CD8-positive, alpha-beta T cell (primary cell): ENCODE measurements at regions of chr7 and their contacts with region 1.

Region 1: DNA sequence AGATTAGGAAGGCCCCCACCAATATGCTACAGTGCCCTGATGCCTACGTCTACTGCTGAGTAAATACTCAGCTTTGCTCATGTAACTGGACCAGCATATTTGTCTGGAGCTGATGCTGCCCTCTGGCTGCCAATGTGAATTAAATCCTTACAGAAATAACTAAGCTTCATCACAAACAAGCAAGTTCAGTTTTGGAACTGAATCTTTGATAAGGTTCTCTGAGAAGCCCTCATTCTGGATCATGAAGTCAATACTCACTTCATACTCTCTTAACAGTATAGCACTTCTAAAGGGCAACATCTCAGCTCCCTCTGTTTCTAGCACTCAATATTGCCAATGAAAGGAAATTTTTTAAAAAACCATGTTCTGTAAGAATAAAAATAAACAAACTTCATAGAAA is 246.7 kb downstream of the ETV1 start:
- DNase-seq: peak in 2 of 9 experiments; percentile 20 to 24
- ATAC-seq: no peak
- H3K4me3 ChIP-seq: no peak overlapping the region
- H3K4me3 Mint-ChIP-seq: no peak overlapping the region
- H3K27ac ChIP-seq: no peak overlapping the region
- H3K27ac Mint-ChIP-seq: no peak overlapping the region
- H3K4me1 ChIP-seq: no peaks in the 10 kb centered on the region
- H3K4me1 Mint-ChIP-seq: no peaks in the 10 kb centered on the region
- H3K27me3 ChIP-seq: no peaks in the 10 kb centered on the region
- H3K27me3 Mint-ChIP-seq: no peaks in the 10 kb centered on the region
- CTCF ChIP-seq: no peak

Region 2: DNA sequence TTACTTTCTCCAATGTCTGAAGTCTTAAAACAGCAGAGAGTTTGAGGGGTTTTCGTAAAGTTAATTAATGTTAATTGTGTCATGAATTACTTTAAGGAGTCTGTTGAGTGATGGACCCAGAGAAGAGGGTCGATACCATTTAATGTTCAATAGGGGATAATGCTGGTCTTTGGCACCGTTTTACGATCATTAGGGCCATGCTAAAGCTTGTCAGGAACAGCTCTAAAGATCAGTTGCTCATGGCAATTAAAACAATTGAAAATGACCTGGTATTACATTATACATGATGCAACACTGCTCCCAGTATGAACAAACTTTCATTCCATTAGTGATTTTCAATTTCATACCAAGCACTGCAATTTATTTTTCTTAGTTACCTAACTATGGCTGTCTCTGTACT is 50.3 kb before region 1 on chr7:
- CTCF ChIA-PET with region 1: no interaction called
- POLR2A ChIA-PET with region 1: no interaction called
- intact Hi-C with region 1: loop called in 1 of 2 experiments (anchors 5 kb)
- DNase-seq: no peak
- ATAC-seq: no peak
- H3K4me3 ChIP-seq: no peak overlapping the region
- H3K4me3 Mint-ChIP-seq: no peak overlapping the region
- H3K27ac ChIP-seq: no peak overlapping the region
- H3K27ac Mint-ChIP-seq: no peak overlapping the region
- H3K4me1 ChIP-seq: no peaks in the 10 kb centered on the region
- H3K4me1 Mint-ChIP-seq: no peaks in the 10 kb centered on the region
- H3K27me3 ChIP-seq: no peaks in the 10 kb centered on the region
- H3K27me3 Mint-ChIP-seq: no peaks in the 10 kb centered on the region
- CTCF ChIP-seq: no peak